Esophagus squamous epithelium (tissue), 5 donors: ENCODE measurements at regions of chr19 and their contacts with region 1.

Region 1: GRCh38 chr19:35495107-35496064 is 5.1 kb upstream of the KRTDAP start:
- DNase-seq: no peak
- H3K4me3 ChIP-seq: peak overlapping the region in 1 of 4 donors; percentile 33
- H3K27ac ChIP-seq: no peak overlapping the region
- H3K4me1 ChIP-seq: peaks cover 5 to 43% (median 7%) of the 10 kb centered on the region in 3 donors
- H3K27me3 ChIP-seq: peaks cover 0 to 38% (median 0%) of the 10 kb centered on the region in 4 donors
- CTCF ChIP-seq: peak; percentile 92 to 99 (median 96)
- POLR2A ChIP-seq: no peak

Region 2: DNA sequence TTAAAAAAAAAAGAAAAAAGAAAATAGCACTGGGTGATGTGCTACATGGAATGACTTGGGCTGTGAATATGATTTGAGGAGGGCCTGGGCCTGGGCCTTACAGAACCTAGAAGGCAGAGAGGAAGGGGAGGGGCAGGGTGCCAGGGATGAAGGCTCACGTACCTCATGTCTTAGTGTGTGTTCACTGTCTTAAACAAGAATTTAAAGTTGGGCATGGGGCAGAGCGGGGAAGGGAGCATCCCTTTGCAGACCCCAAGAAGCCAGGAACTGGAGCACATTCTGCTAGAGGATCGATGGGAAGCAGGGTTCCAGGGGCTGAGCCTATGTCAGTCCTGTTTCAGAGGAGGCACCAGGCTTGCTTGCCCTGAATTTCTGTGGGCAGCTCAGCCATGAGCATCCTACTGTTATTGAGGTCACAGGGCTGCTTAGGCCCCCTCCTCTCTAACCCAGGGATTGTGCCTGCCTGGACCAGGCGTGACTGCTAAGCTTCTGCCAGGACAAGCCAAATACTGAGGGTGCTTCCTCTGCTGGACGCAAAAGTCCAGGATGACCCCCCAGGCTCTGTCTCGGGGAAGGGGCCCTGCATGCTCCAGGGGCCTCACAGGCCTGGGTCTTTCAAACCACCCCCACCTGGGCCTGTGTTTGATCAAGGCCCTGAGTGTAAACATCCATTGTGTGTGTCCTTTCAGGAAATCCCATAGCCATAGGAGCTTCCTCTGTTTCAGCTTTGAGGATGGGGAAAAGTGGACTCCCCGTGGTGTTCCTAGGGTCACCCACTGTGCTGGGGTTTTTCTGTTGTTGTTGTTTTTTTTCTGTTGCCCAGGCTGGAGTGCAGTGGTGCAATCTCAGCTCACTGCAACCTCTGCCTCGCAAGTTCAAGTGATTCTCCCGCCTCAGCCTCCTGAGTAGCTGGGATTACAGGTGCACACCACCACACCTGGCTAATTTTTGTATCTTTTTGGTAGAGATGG is 241.8 kb before region 1 on chr19:
- intact Hi-C with region 1: no loop called
- DNase-seq: no peak
- H3K4me3 ChIP-seq: no peak overlapping the region
- H3K27ac ChIP-seq: peak overlapping the region in 2 of 4 donors; percentile 63
- H3K4me1 ChIP-seq: peaks cover 0 to 51% (median 3%) of the 10 kb centered on the region in 3 donors
- H3K27me3 ChIP-seq: peaks cover 0 to 42% (median 0%) of the 10 kb centered on the region in 4 donors
- CTCF ChIP-seq: no peak
- POLR2A ChIP-seq: no peak

Region 3: GRCh38 chr19:35352448-35353304 is 142.7 kb before region 1 on chr19:
- intact Hi-C with region 1: loop called (anchors 5 kb)
- DNase-seq: no peak
- H3K4me3 ChIP-seq: no peak overlapping the region
- H3K27ac ChIP-seq: no peak overlapping the region
- H3K4me1 ChIP-seq: peaks cover 0 to 6% (median 0%) of the 10 kb centered on the region in 3 donors
- H3K27me3 ChIP-seq: peaks cover 0 to 74% (median 0%) of the 10 kb centered on the region in 4 donors
- CTCF ChIP-seq: peak; percentile 60 to 90 (median 77)
- POLR2A ChIP-seq: no peak

Region 4: DNA sequence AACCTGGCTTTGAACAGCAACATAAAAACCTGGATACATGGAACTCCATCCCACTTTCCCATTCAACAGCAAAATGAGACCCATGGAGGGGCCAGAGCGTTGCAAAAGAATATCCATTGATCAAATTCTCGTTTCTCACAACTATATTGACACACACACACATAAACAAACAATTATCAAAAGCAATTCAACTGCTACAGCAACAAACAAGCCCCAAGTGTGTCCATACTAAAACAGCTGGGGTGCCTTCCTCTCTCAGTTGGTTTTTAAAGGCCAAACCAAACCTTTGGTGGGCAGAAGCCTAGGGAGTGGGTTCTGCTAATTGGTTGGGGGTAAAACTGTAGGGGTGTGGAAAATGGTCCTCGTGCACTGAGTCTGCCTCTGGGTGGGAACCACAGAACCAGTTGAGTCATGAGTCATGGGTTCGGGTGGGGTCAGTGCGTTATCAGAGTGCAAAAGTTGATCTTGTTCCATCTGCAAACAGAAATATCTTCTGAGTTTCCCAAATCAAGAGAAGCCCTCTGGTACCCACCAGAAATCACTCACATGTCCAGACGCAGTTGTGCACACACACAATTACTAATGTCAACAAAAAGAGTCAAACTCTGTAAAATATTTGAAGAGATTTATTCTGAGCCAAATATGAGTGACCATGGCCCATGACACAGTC is 106.1 kb before region 1 on chr19:
- intact Hi-C with region 1: no loop called
- DNase-seq: no peak
- H3K4me3 ChIP-seq: no peak overlapping the region
- H3K27ac ChIP-seq: no peak overlapping the region
- H3K4me1 ChIP-seq: no peaks in the 10 kb centered on the region
- H3K27me3 ChIP-seq: peaks cover 0 to 14% (median 0%) of the 10 kb centered on the region in 4 donors
- CTCF ChIP-seq: no peak
- POLR2A ChIP-seq: no peak

Region 5: DNA sequence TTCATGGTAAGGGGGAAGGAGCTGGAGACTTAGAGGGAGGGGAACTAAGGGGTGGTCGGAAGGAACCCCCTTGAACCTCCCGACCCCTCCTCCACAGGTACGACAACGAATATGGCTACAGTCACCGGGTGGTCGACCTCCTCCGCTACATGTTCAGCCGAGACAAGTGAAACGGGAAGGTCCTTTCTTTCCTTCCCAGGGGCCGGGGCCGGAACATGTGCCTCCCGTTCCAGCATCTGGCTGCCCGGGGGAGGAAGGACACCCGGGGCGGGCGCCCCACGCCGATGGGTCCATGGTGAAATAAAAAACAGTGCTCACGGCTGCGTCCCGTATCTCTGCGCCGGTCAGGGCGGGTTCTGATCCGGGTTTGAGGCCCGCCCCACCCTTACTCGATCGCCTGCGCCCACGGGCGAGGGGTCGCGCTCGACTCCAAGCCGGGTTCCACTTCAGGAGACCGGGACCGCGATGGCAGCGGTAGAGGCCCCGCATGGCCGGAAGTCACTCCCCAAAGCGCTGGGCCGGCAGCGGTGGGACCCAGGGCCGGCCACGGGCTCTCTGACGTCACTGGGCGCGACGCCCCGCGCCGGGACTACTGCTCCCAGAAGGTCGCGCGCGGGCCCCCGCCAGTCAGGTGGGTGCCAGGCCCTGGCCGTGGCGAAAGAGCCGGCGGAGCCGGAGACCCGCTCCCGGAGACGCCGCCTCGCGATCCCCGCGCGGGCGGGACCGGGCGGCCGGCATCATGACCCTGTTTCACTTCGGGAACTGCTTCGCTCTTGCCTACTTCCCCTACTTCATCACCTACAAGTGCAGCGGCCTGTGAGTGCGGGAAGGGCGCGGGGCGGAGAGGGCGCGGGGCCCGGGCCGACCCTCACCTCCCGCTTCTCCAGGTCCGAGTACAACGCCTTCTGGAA is 49.9 kb after region 1 on chr19 and contains the start of gene TMEM147:
- intact Hi-C with region 1: no loop called
- DNase-seq: peak; percentile 44
- H3K4me3 ChIP-seq: peak within 1 kb of the TSS; percentile 63 to 88 (median 82)
- H3K27ac ChIP-seq: peak within 1 kb of the TSS; percentile 85 to 92 (median 86)
- H3K4me1 ChIP-seq: peaks cover 18 to 47% (median 19%) of the 10 kb centered on the region in 3 donors
- H3K27me3 ChIP-seq: no peaks in the 10 kb centered on the region
- CTCF ChIP-seq: peak in 2 of 6 experiments; percentile 18 to 21
- POLR2A ChIP-seq: peak in 2 of 4 donors; percentile 57 to 66
- total RNA-seq, gene TMEM147: 68.1 to 119 (median 89.6) TPM